Caco-2 (cell line): ENCODE measurements at regions of chr20 and their contacts with region 1.

Region 1: GRCh38 chr20:57560554-57561355 is at the start of gene PCK1:
- DNase-seq: peak; percentile 59 to 84
- H3K4me3 ChIP-seq: no peak within 1 kb of the TSS
- H3K4me3 Mint-ChIP-seq: no peak within 1 kb of the TSS
- H3K27ac Mint-ChIP-seq: no peak within 1 kb of the TSS
- H3K4me1 ChIP-seq: peaks cover 24% of the 10 kb centered on the region; the same call in 1 of the 2 replicates
- H3K4me1 Mint-ChIP-seq: peaks cover 6% of the 10 kb centered on the region
- H3K27me3 ChIP-seq: no peaks in the 10 kb centered on the region
- H3K27me3 Mint-ChIP-seq: peaks cover 33% of the 10 kb centered on the region
- CTCF ChIP-seq: no peak
- total RNA-seq, gene PCK1: 0.42 TPM in 1 of 2 replicates, not detected in the other

Region 2: DNA sequence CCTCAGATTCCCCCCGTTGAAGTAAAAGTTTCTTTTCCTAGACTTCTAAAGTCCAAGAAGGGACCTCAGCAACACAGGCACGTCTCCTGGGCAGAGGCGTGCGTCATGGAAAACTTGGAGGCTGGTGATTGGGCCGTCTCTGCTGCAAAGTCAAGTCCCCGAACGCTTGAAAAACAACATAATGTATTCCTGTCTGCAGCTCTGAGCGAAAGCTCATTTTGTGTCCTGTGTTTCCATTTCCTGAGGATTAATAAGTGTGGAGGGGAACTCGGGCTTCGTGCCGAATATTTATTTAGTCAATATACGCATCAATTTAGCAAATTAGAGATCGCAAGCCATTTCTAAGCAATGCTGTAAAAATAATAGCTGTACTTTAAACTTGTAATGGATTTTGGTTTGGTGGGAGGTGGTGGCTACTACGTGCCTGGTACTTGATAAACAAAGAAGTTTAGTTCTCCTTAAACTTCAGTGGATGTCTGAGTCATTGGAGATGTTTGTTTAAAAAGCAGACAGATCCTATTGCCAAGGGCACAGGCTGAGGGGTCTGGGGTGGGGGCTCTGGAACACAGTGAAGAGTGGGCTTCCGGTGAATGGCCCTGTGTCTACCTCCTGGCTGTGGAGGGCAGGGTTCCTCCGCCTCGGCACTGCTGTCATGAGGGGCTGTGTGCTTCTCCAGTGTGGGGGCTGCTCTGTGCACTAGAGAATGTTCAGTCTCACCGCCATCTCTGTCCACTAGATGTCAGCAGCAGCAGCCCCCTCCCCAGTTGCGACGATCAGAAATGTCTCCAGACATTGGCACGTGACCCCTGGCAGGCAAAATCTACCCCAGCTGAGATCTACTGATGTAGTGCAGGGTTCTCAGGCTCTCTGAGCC is 21.9 kb after region 1 on chr20:
- CTCF ChIA-PET with region 1: interaction called, 3 read pairs
- POLR2A ChIA-PET with region 1: no interaction called
- intact Hi-C with region 1: loop called (anchors 2 kb)
- DNase-seq: peak in 1 of 2 experiments; percentile 72
- H3K4me3 ChIP-seq: no peak overlapping the region
- H3K4me3 Mint-ChIP-seq: no peak overlapping the region
- H3K27ac Mint-ChIP-seq: no peak overlapping the region
- H3K4me1 ChIP-seq: no peaks in the 10 kb centered on the region
- H3K4me1 Mint-ChIP-seq: no peaks in the 10 kb centered on the region
- H3K27me3 ChIP-seq: no peaks in the 10 kb centered on the region
- H3K27me3 Mint-ChIP-seq: peaks cover 11% of the 10 kb centered on the region
- CTCF ChIP-seq: peak; percentile 92 to 95